ENCODE measurements at regions of chr4 and their contacts with region 1.

Region 1: GRCh38 chr4:73653695-73654106 is 33.5 kb upstream of the RASSF6 start:
- DNase-seq: peak; percentile 31
- ATAC-seq: peak; percentile 66
- H3K4me3 Mint-ChIP-seq: no peak overlapping the region
- H3K27ac Mint-ChIP-seq: no peak overlapping the region
- H3K4me1 Mint-ChIP-seq: no peaks in the 10 kb centered on the region
- H3K27me3 Mint-ChIP-seq: no peaks in the 10 kb centered on the region

Region 2: GRCh38 chr4:72326692-72327632 is 1326.7 kb before region 1 on chr4:
- CTCF ChIA-PET with region 1: no interaction called
- POLR2A ChIA-PET with region 1: no interaction called
- intact Hi-C with region 1: loop called in 1 of 2 experiments (anchors 10 kb)
- DNase-seq: no peak
- ATAC-seq: no peak
- H3K4me3 Mint-ChIP-seq: no peak overlapping the region
- H3K27ac Mint-ChIP-seq: no peak overlapping the region
- H3K4me1 Mint-ChIP-seq: no peaks in the 10 kb centered on the region
- H3K27me3 Mint-ChIP-seq: peaks cover 5% of the 10 kb centered on the region

Region 3: DNA sequence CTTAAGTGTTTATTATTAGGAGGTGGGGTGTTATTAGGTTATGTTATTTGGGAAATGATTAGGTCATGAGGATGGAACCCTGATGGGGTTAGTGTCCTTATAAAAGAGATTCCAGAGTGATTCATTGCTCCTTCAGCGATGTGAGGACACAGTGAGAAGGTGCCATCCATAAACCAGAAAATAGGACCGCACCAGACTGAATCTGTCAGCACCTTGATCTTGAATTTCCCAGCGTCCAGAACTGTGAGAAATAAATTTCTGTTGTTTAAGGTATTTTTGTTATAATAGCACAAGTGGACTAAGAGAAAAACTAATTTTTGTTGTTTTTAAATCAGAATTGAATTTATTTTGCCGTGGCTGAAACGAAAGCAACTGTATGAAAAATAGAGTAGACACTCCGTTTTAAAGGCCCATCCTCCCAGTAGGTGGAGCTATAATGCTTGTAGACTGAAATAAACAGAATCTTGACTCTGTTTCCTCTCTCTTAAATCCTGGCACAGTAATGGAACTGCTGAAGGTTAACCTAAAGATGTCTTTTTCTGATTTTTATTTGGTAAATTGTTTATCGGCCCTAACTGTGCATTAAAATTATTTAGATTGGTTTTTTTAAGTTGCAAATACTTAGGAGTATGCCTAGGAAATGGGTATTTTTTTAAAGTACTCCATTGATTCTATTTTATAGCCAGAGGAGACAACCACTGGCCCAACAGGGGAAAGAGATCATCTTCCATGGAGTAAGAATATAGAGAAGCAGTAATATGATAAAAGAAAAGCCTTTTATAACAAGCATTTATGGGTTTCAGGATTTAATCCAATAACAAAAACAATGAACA is 951.5 kb before region 1 on chr4:
- CTCF ChIA-PET with region 1: no interaction called
- POLR2A ChIA-PET with region 1: no interaction called
- intact Hi-C with region 1: loop called in 1 of 2 experiments (anchors 10 kb)
- DNase-seq: peak; percentile 44
- ATAC-seq: peak; percentile 68
- H3K4me3 Mint-ChIP-seq: peak overlapping the region; percentile 69
- H3K27ac Mint-ChIP-seq: no peak overlapping the region
- H3K4me1 Mint-ChIP-seq: no peaks in the 10 kb centered on the region
- H3K27me3 Mint-ChIP-seq: peaks cover 4% of the 10 kb centered on the region

Region 4: DNA sequence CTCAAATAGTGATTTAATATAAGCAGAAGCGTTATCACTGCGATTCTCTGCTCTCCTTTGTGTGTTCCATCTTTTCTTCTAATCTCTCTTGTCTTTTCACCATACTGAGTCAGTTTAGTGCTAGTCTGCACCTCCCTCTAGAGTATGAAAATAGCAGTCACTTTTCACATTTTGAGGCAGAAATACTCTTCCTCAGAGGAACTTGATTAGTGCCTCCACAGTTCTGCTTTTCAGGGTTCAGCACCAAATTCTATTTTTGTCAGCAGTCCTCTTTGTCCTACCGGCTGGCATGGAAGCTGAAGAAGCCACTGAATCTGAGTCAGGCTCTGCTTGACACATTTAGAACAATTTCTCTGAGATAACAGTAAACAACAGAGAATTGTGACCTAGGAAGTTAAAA is 345.4 kb before region 1 on chr4:
- CTCF ChIA-PET with region 1: interaction called, 5 read pairs
- POLR2A ChIA-PET with region 1: no interaction called
- intact Hi-C with region 1: loop called (anchors 2 to 5 kb)
- DNase-seq: no peak
- ATAC-seq: no peak
- H3K4me3 Mint-ChIP-seq: no peak overlapping the region
- H3K27ac Mint-ChIP-seq: no peak overlapping the region
- H3K4me1 Mint-ChIP-seq: no peaks in the 10 kb centered on the region
- H3K27me3 Mint-ChIP-seq: no peaks in the 10 kb centered on the region

Region 5: GRCh38 chr4:73341454-73341853 is 312.2 kb before region 1 on chr4:
- CTCF ChIA-PET with region 1: interaction called, 3 read pairs
- POLR2A ChIA-PET with region 1: no interaction called
- intact Hi-C with region 1: loop called (anchors 1 to 10 kb)
- DNase-seq: peak; percentile 37
- ATAC-seq: no peak
- H3K4me3 Mint-ChIP-seq: no peak overlapping the region
- H3K27ac Mint-ChIP-seq: no peak overlapping the region
- H3K4me1 Mint-ChIP-seq: no peaks in the 10 kb centered on the region
- H3K27me3 Mint-ChIP-seq: peaks cover 2% of the 10 kb centered on the region

Region 6: DNA sequence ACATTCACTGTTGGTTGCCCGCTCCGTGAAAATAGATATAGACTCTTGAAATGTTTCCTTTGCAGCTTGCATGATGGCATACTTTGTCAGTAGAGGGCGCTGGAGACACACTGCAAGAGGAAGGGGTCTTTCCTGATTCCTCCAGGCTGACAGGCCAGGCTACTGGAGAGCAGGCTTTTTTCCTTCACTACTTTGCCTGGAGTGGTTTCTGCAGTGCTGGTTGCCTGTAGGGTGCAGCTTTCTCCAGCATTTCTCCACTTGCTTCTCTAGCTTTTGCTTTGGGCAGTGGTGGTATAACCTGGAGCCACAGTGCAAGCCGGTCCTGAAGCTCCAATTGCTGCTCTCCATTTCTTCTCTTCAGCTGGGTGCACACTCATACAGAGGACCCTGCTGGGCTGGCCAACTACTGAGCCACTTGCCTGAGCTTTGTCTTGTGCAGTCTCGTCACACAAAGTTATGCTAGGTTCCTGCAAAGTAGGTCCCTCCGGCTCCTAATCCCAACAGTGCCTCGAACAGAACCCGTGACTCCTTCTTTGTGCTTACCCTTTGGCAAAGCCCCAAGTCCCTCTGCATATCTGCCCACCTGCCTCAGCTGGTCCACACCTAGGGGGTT is 79.8 kb before region 1 on chr4:
- CTCF ChIA-PET with region 1: interaction called, 8 read pairs
- POLR2A ChIA-PET with region 1: no interaction called
- intact Hi-C with region 1: loop called (anchors 1 kb)
- DNase-seq: peak; percentile 54
- ATAC-seq: peak; percentile 19
- H3K4me3 Mint-ChIP-seq: no peak overlapping the region
- H3K27ac Mint-ChIP-seq: no peak overlapping the region
- H3K4me1 Mint-ChIP-seq: peaks cover 3% of the 10 kb centered on the region
- H3K27me3 Mint-ChIP-seq: peaks cover 4% of the 10 kb centered on the region

Region 7: DNA sequence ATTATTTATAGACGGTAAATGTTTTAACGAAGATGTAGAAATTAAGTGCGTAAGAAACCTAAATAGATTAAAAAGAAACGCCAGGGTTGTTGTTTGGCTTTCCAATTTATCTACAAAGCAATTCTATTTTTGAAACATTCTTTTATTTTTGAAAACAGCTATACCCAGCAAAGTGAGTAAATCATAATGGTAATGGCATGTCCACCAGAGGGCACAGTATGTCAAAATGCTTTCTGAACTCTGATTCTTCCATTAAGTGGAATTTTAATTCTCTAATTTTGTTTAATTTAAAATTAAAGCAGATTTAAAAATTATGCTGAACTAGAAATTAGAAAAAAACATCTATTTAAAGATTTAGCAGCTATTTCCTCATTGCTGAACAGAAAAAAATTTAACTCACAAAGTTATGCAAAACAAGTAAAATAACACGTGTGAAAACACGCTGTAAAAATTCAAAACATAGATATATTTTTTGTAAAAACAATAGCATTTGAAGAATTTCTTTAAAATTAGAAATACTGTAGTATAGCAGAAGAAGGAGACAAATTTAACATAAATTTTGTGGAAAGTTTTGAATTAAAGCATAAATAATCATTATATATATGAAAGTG is 60.0 kb before region 1 on chr4:
- CTCF ChIA-PET with region 1: interaction called, 9 read pairs
- POLR2A ChIA-PET with region 1: no interaction called
- intact Hi-C with region 1: loop called (anchors 1 to 5 kb)
- DNase-seq: peak; percentile 8
- ATAC-seq: no peak
- H3K4me3 Mint-ChIP-seq: no peak overlapping the region
- H3K27ac Mint-ChIP-seq: no peak overlapping the region
- H3K4me1 Mint-ChIP-seq: no peaks in the 10 kb centered on the region
- H3K27me3 Mint-ChIP-seq: no peaks in the 10 kb centered on the region

Region 8: GRCh38 chr4:74181219-74181618 is 527.5 kb after region 1 on chr4:
- CTCF ChIA-PET with region 1: no interaction called
- POLR2A ChIA-PET with region 1: no interaction called
- intact Hi-C with region 1: no loop called
- DNase-seq: no peak
- ATAC-seq: peak; percentile 77
- H3K4me3 Mint-ChIP-seq: no peak overlapping the region
- H3K27ac Mint-ChIP-seq: no peak overlapping the region
- H3K4me1 Mint-ChIP-seq: no peaks in the 10 kb centered on the region
- H3K27me3 Mint-ChIP-seq: no peaks in the 10 kb centered on the region

Region 9: GRCh38 chr4:74217365-74217764 is 563.7 kb after region 1 on chr4:
- CTCF ChIA-PET with region 1: no interaction called
- POLR2A ChIA-PET with region 1: no interaction called
- intact Hi-C with region 1: no loop called
- DNase-seq: no peak
- ATAC-seq: no peak
- H3K4me3 Mint-ChIP-seq: no peak overlapping the region
- H3K27ac Mint-ChIP-seq: no peak overlapping the region
- H3K4me1 Mint-ChIP-seq: peaks cover 2% of the 10 kb centered on the region
- H3K27me3 Mint-ChIP-seq: no peaks in the 10 kb centered on the region